ENCODE measurements at regions of chr16 and their contacts with region 1.

Region 1: DNA sequence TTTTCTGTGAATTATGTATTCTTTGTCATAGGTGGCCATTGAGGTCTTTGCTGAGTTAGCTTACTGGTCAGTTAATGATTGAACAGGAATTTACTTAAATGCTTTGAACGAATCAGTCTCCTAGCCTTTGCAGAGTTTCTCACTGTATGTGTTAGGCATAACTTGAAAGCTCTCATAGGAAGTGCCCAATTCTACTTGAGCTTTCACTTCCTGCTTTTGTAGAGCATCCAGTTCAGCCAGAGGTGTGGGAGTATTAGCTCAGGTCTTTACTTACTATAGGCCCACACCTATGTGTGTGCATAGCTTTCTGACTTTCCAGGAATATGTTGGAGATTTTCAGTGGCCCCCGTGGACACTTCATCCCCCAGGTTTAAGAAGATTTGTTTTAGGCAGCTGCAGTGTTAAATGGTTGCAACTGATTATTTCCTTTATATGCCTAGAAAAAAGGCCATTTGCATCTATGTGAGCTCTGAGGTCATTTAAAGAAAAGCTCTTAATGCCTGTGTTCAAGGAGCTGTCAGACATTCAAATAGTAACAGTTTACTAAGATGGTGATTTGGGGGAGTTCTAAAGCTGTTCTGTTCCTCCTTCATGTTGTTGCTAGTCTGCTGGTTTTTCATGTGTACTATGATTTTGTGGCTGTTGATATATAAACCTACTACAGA is 62.3 kb downstream of the PHKB start:
- DNase-seq: no peak
- ATAC-seq: peak; percentile 98
- H3K4me3 Mint-ChIP-seq: peak overlapping the region; percentile 3
- H3K27ac Mint-ChIP-seq: peak overlapping the region; percentile 83
- H3K4me1 Mint-ChIP-seq: peaks cover 17% of the 10 kb centered on the region
- H3K27me3 Mint-ChIP-seq: no peaks in the 10 kb centered on the region
- CTCF ChIP-seq: no peak

Region 2: GRCh38 chr16:47565454-47565853 is 42.0 kb after region 1 on chr16:
- CTCF ChIA-PET with region 1: no interaction called
- POLR2A ChIA-PET with region 1: no interaction called
- intact Hi-C with region 1: loop called (anchors 5 kb)
- DNase-seq: no peak
- ATAC-seq: no peak
- H3K4me3 Mint-ChIP-seq: no peak overlapping the region
- H3K27ac Mint-ChIP-seq: peak overlapping the region; percentile 62
- H3K4me1 Mint-ChIP-seq: peaks cover 40% of the 10 kb centered on the region
- H3K27me3 Mint-ChIP-seq: no peaks in the 10 kb centered on the region
- CTCF ChIP-seq: no peak

Measured in activated B cell treated with CpG ODN at 0.5 μM for 24 hours (primary cell).